Naive thymus-derived CD4-positive, alpha-beta T cell (primary cell): ENCODE measurements at regions of chr10 and their contacts with region 1.

Region 1: DNA sequence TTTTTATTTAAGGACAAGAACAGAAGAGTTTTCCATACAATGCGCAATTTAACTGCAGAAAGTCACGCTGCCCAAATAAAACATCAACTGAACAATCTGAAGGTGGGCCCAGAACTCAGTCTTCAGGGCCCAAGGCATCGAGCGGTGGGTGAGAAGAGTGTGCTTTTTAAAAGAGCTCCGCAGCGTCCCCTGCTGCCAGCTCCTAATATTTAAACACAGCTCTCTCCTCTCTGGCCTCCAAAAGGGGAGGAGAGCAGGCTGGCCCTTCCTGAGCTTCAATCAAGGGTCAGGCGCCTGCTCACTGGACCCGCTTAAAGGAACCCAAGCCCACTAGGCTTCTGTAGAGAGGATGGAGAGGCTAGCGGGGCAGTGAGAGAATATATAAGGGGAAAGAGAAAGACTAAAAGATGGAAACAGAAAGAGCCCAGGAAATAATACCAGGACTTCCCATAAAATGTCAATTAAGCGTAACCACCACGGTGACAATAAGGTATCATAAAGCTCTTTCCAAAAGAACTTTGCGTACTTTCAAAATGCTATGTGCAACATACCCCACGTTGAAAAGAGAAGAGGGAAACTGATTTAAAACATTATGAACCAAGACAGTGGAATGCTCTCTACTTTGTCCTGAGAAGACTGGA is 2.8 kb downstream of the FAM53B start:
- DNase-seq: peak in 8 of 9 donors; percentile 62 to 80 (median 76)
- ATAC-seq: peak; percentile 68
- H3K4me3 ChIP-seq: peak overlapping the region; percentile 61
- H3K4me3 Mint-ChIP-seq: peak overlapping the region; percentile 83 to 98 (median 96)
- H3K27ac ChIP-seq: peak overlapping the region; percentile 57
- H3K27ac Mint-ChIP-seq: peak overlapping the region; percentile 81 to 92 (median 87)
- H3K4me1 ChIP-seq: peaks cover 63 to 68% of the 10 kb centered on the region in 2 donors
- H3K4me1 Mint-ChIP-seq: peaks cover 40 to 78% (median 73%) of the 10 kb centered on the region in 7 donors
- H3K27me3 ChIP-seq: no peaks in the 10 kb centered on the region
- H3K27me3 Mint-ChIP-seq: peaks cover 0 to 27% (median 0%) of the 10 kb centered on the region in 5 donors

Region 2: GRCh38 chr10:124418726-124419501 is 322.5 kb before region 1 on chr10 and contains the start of gene OAT:
- CTCF ChIA-PET with region 1: no interaction called
- POLR2A ChIA-PET with region 1: no interaction called
- intact Hi-C with region 1: loop called (anchors 2 to 10 kb)
- DNase-seq: peak; percentile 90 to 96 (median 94)
- ATAC-seq: peak; percentile 99
- H3K4me3 ChIP-seq: peak within 1 kb of the TSS; percentile 76
- H3K4me3 Mint-ChIP-seq: peak within 1 kb of the TSS; percentile 80 to 91 (median 84)
- H3K27ac ChIP-seq: peak within 1 kb of the TSS; percentile 80
- H3K27ac Mint-ChIP-seq: peak within 1 kb of the TSS in 8 of 9 donors; percentile 31 to 90 (median 83)
- H3K4me1 ChIP-seq: peaks cover 8 to 10% of the 10 kb centered on the region in 2 donors
- H3K4me1 Mint-ChIP-seq: peaks cover 8 to 41% (median 31%) of the 10 kb centered on the region in 7 donors
- H3K27me3 ChIP-seq: no peaks in the 10 kb centered on the region
- H3K27me3 Mint-ChIP-seq: peaks cover 0 to 18% (median 2%) of the 10 kb centered on the region in 5 donors
- total RNA-seq, gene OAT: 29.6 to 47.0 (median 39.1) TPM

Region 3: GRCh38 chr10:124545351-124546054 is 195.9 kb before region 1 on chr10:
- CTCF ChIA-PET with region 1: interaction called, 110 read pairs
- POLR2A ChIA-PET with region 1: interaction called, 7 read pairs
- intact Hi-C with region 1: loop called (anchors 1 kb)
- DNase-seq: peak in 1 of 9 donors; percentile 10
- ATAC-seq: no peak
- H3K4me3 ChIP-seq: no peak overlapping the region
- H3K4me3 Mint-ChIP-seq: peak overlapping the region in 6 of 10 donors; percentile 18 to 55 (median 39)
- H3K27ac ChIP-seq: no peak overlapping the region
- H3K27ac Mint-ChIP-seq: peak overlapping the region in 4 of 9 donors; percentile 2 to 46 (median 37)
- H3K4me1 ChIP-seq: peaks cover 0 to 17% of the 10 kb centered on the region in 2 donors
- H3K4me1 Mint-ChIP-seq: peaks cover 0 to 29% (median 22%) of the 10 kb centered on the region in 7 donors
- H3K27me3 ChIP-seq: no peaks in the 10 kb centered on the region
- H3K27me3 Mint-ChIP-seq: peaks cover 0 to 5% (median 0%) of the 10 kb centered on the region in 5 donors

Region 4: GRCh38 chr10:124641282-124642087 is 99.9 kb before region 1 on chr10:
- CTCF ChIA-PET with region 1: interaction called, 29 read pairs
- POLR2A ChIA-PET with region 1: interaction called, 53 read pairs
- intact Hi-C with region 1: loop called in 1 of 2 experiments (anchors 1 kb)
- DNase-seq: peak in 2 of 9 donors; percentile 22 to 25
- ATAC-seq: peak; percentile 78
- H3K4me3 ChIP-seq: no peak overlapping the region
- H3K4me3 Mint-ChIP-seq: peak overlapping the region; percentile 33 to 74 (median 66)
- H3K27ac ChIP-seq: peak overlapping the region; percentile 10
- H3K27ac Mint-ChIP-seq: peak overlapping the region; percentile 74 to 97 (median 84)
- H3K4me1 ChIP-seq: peaks cover 55 to 64% of the 10 kb centered on the region in 2 donors
- H3K4me1 Mint-ChIP-seq: peaks cover 47 to 93% (median 78%) of the 10 kb centered on the region in 7 donors
- H3K27me3 ChIP-seq: no peaks in the 10 kb centered on the region
- H3K27me3 Mint-ChIP-seq: no peaks in the 10 kb centered on the region

Region 5: GRCh38 chr10:124683814-124684213 is 57.6 kb before region 1 on chr10:
- CTCF ChIA-PET with region 1: interaction called, 10 read pairs
- POLR2A ChIA-PET with region 1: interaction called, 18 read pairs
- intact Hi-C with region 1: loop called in 1 of 2 experiments (anchors 2 kb)
- DNase-seq: no peak
- ATAC-seq: no peak
- H3K4me3 ChIP-seq: peak overlapping the region; percentile 22
- H3K4me3 Mint-ChIP-seq: peak overlapping the region in 8 of 10 donors; percentile 14 to 66 (median 44)
- H3K27ac ChIP-seq: peak overlapping the region; percentile 28
- H3K27ac Mint-ChIP-seq: peak overlapping the region in 8 of 9 donors; percentile 16 to 94 (median 64)
- H3K4me1 ChIP-seq: peaks cover 47 to 90% of the 10 kb centered on the region in 2 donors
- H3K4me1 Mint-ChIP-seq: peaks cover 52 to 94% (median 75%) of the 10 kb centered on the region in 7 donors
- H3K27me3 ChIP-seq: no peaks in the 10 kb centered on the region
- H3K27me3 Mint-ChIP-seq: no peaks in the 10 kb centered on the region

Region 6: DNA sequence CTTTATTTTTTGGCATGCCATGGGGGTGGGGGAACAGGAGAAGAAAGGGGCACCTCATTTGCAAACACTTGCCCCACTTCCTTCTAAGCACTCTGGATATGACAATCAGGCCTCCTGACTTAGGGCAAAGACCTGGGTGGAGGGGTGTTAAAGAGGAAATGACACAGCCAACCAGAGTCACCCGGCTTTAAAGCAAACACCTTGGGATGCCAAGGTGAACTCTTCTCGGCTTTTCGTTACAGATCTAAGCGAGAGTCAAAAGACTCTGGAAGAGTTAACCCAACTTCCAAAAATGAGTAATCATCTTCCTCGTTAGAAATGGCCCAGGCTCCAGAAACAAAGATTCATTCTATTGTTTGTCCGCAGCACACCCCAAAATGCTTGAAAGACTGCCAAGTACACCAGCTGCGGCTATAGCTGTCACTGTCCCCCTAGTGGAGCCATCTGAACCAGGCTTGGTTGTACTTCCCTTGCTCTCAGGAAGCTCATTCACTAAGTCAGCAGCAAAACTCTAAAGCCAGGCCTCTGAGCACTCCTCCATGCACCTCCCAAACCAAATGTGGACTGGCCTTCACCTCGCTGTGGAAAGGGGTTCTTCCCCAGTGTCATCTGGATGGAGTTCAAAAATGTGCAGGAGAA is 22.1 kb before region 1 on chr10:
- CTCF ChIA-PET with region 1: interaction called, 150 read pairs
- POLR2A ChIA-PET with region 1: interaction called, 77 read pairs
- intact Hi-C with region 1: loop called (anchors 1 to 2 kb)
- DNase-seq: peak in 8 of 9 donors; percentile 49 to 85 (median 80)
- ATAC-seq: peak; percentile 63
- H3K4me3 ChIP-seq: peak overlapping the region; percentile 19
- H3K4me3 Mint-ChIP-seq: peak overlapping the region; percentile 46 to 91 (median 73)
- H3K27ac ChIP-seq: peak overlapping the region; percentile 72
- H3K27ac Mint-ChIP-seq: peak overlapping the region; percentile 83 to 99 (median 94)
- H3K4me1 ChIP-seq: peaks cover 82 to 96% of the 10 kb centered on the region in 2 donors
- H3K4me1 Mint-ChIP-seq: peaks cover 80 to 99% (median 88%) of the 10 kb centered on the region in 7 donors
- H3K27me3 ChIP-seq: no peaks in the 10 kb centered on the region
- H3K27me3 Mint-ChIP-seq: no peaks in the 10 kb centered on the region

Region 7: GRCh38 chr10:124916585-124917427 is 175.4 kb after region 1 on chr10:
- CTCF ChIA-PET with region 1: no interaction called
- POLR2A ChIA-PET with region 1: interaction called, 3 read pairs
- intact Hi-C with region 1: loop called (anchors 1 kb)
- DNase-seq: peak; percentile 93 to 97 (median 96)
- ATAC-seq: peak; percentile 95
- H3K4me3 ChIP-seq: peak overlapping the region; percentile 97
- H3K4me3 Mint-ChIP-seq: peak overlapping the region; percentile 86 to 99 (median 94)
- H3K27ac ChIP-seq: peak overlapping the region; percentile 98
- H3K27ac Mint-ChIP-seq: peak overlapping the region; percentile 89 to 99 (median 94)
- H3K4me1 ChIP-seq: peaks cover 15 to 17% of the 10 kb centered on the region in 2 donors
- H3K4me1 Mint-ChIP-seq: peaks cover 30 to 49% (median 44%) of the 10 kb centered on the region in 7 donors
- H3K27me3 ChIP-seq: no peaks in the 10 kb centered on the region
- H3K27me3 Mint-ChIP-seq: peaks cover 0 to 8% (median 0%) of the 10 kb centered on the region in 5 donors

Region 8: DNA sequence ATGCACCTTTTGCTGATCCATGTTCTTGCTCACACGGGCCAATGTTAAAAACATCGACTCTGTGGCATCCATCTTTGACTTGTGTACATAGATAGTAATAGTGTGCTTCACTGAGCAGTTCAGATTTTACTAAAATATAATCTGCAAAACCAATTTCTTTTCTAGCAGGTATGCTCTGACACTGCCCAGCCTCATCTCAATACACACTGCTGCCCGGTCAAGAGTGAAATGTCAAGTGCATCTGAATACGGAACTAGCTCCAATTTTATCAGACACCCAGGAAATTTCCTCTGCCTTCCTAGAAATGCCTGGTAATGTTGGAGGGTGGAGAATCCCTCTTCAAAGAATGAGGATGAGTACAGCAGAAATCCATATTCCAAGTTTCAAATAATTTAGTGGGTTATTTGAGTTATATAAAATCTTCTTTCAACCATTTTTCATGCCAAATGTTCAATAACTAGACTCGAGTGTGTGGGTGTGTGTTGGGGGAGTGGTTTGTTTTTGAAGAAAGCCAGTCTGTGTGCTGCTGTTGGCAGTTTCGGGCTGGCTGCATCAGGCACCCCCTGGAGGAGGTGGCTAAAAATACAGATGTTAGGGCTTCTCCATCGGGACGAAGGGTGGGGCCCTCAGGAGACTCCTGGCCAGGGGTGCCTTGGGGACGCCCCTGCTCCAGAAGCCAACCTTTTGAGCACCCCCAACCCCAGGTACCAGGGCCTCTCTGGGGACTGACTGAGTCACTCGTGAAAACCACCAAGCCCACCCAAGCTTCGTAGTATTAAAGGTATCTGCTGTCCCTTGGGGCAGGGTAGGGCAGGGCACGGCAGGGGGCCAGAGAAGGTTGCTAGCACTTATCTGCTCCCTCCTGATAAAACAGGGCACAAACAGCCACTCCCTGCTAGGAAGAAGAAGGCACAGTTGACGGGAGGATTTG is 403.6 kb after region 1 on chr10:
- CTCF ChIA-PET with region 1: no interaction called
- POLR2A ChIA-PET with region 1: no interaction called
- intact Hi-C with region 1: no loop called
- DNase-seq: no peak
- ATAC-seq: peak; percentile 42
- H3K4me3 ChIP-seq: no peak overlapping the region
- H3K4me3 Mint-ChIP-seq: no peak overlapping the region
- H3K27ac ChIP-seq: no peak overlapping the region
- H3K27ac Mint-ChIP-seq: no peak overlapping the region
- H3K4me1 ChIP-seq: no peaks in the 10 kb centered on the region
- H3K4me1 Mint-ChIP-seq: peaks cover 0 to 10% (median 0%) of the 10 kb centered on the region in 7 donors
- H3K27me3 ChIP-seq: no peaks in the 10 kb centered on the region
- H3K27me3 Mint-ChIP-seq: peaks cover 20 to 66% (median 27%) of the 10 kb centered on the region in 5 donors